OCI-LY7 (cell line): ENCODE measurements at regions of chr21 and their contacts with region 1.

Region 1: DNA sequence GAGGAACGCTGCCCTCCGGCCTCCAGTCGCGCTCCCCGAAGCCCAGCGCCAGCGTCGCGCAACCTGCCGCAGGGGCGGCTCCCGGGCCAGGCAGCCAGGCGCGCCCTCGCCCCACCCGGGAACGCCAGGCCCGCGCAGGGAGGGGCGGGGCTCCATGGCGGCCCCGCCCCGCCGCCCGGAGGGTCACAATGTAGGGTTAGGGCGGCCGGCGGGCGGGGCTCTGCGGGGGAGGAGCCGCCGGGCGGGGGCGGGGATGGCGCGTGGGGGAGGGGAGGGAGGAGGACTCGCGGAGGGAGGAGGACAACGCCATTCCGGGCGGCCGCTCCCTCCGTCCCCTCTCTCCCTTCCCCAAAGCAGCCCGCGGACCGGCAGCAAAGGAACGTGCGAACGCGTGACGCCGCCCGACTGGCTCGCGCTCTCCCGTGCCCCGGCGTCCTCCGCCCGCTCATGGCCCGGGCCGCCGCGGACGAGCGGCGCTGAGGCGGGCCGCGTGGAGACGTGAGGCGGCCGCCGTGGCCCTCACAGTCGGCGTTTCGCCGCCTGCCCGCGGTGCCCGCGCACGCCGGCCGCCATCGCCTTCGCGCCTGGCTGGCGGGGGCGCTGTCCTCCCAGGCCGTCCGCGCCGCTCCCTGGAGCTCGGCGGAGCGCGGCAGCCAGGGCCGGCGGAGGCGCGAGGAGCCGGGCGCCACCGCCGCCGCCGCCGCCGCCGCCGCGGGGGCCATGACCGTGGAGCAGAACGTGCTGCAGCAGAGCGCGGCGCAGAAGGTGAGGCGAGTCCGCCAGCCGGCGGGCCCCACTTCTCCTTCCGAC is at the start of gene USP25:
- DNase-seq: peak; percentile 79
- H3K4me3 ChIP-seq: peak within 1 kb of the TSS; percentile 86
- H3K27ac ChIP-seq: peak within 1 kb of the TSS; percentile 49
- H3K4me1 ChIP-seq: peaks cover 14% of the 10 kb centered on the region
- CTCF ChIP-seq: no peak
- total RNA-seq, gene USP25: 25.1 and 27.6 TPM in 2 replicates

Region 2: DNA sequence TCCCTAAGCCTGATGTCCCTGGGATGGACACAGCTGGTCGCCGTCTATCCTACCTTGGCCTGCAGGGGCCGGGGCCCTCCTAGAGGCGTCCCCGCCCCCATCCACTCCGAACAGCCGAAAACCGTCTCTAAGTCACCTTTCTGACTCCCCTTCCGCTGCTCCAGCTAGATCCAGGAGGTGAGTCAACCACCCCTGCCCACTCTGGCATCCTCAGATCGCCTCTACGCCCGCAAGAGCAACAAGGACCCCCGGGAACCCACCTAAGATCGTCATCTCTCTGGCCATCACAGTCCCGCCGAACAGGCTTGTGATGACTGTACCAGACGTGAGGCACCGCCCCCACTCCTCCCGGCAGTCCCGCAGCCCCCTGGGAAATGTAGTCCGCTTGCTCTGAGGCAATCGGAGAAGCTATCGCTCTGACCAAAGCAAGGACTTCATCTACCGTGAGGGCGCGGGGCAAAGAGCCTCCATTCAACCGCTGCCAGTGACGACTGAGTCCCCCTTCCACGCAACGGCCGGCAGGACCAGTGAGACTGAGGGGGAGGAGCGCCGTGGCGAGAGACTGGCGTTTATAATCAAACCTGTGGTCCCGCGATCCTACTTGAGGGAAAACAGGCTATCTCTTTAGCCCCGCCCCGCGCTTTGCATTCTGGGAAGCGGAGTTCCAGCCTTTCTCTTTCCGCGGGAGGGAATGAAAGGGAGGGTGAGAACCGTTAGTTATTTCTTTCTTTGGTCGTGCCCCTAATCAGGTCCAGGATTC is 1346.9 kb before region 1 on chr21 and contains the start of gene HSPA13:
- CTCF ChIA-PET with region 1: no interaction called
- POLR2A ChIA-PET with region 1: no interaction called
- intact Hi-C with region 1: loop called (anchors 2 kb)
- DNase-seq: peak; percentile 99
- H3K4me3 ChIP-seq: peak within 1 kb of the TSS; percentile 88
- H3K27ac ChIP-seq: peak within 1 kb of the TSS; percentile 51
- H3K4me1 ChIP-seq: peaks cover 29% of the 10 kb centered on the region
- CTCF ChIP-seq: no peak
- total RNA-seq, gene HSPA13: 14.6 and 17.8 TPM in 2 replicates

Region 3: DNA sequence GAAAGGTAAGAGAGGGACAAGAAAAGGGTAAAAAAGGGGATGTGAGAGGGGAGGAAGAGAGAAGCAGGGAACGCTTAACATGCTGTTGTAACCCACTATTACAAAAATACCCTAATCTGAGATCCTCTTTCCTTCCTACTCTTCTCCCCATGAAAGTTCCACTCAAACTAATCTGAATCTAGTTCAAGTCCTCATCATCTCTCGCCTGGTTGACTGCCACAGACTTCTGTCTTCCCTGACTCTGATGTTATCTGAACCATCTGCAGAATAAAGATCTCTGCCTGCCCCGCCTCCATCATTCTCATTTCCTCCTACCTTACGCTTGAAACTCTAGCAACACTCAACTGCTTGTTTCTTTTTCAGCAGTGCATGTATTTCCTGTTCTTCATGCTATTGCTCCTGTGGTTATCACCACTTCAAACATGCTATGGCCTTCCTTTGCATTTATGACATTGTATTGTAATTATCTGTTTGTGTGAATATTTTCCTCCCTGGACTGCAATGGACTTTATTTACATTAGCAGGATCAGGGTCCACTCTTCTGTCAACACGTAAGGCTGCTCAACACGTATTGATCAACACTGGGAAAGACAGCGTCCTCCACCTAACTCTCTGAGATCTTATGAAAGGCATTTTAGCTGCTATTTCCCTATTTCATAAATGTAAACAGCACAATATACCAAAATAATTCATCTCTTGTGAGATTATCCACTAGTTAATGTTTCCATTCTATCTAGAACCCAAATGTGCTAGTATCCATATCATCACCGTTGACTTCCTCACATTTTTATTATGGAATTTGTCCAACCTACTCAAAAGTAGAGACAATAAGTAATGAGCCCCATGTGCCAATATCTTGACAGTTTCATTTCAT is 215.6 kb before region 1 on chr21:
- CTCF ChIA-PET with region 1: no interaction called
- POLR2A ChIA-PET with region 1: no interaction called
- intact Hi-C with region 1: loop called (anchors 5 kb)
- DNase-seq: peak; percentile 84
- H3K4me3 ChIP-seq: peak overlapping the region; percentile 43
- H3K27ac ChIP-seq: peak overlapping the region; percentile 86
- H3K4me1 ChIP-seq: peaks cover 27% of the 10 kb centered on the region
- CTCF ChIP-seq: no peak

Region 4: GRCh38 chr21:15815285-15815684 is 85.4 kb after region 1 on chr21:
- CTCF ChIA-PET with region 1: no interaction called
- POLR2A ChIA-PET with region 1: no interaction called
- intact Hi-C with region 1: loop called (anchors 5 kb)
- DNase-seq: no peak
- H3K4me3 ChIP-seq: no peak overlapping the region
- H3K27ac ChIP-seq: no peak overlapping the region
- H3K4me1 ChIP-seq: no peaks in the 10 kb centered on the region
- CTCF ChIP-seq: no peak